CD8-positive, alpha-beta T cell (primary cell): ENCODE measurements at regions of chr12 and their contacts with region 1.

Region 1: GRCh38 chr12:117182866-117183265 is 7.4 kb downstream of the FBXO21 start:
- DNase-seq: no peak
- ATAC-seq: no peak
- H3K4me3 ChIP-seq: no peak overlapping the region
- H3K4me3 Mint-ChIP-seq: no peak overlapping the region
- H3K27ac ChIP-seq: no peak overlapping the region
- H3K27ac Mint-ChIP-seq: no peak overlapping the region
- H3K4me1 ChIP-seq: no peaks in the 10 kb centered on the region
- H3K4me1 Mint-ChIP-seq: peaks cover 29% of the 10 kb centered on the region
- H3K27me3 ChIP-seq: no peaks in the 10 kb centered on the region
- H3K27me3 Mint-ChIP-seq: no peaks in the 10 kb centered on the region
- CTCF ChIP-seq: no peak

Region 2: GRCh38 chr12:116249938-116250337 is 932.9 kb before region 1 on chr12:
- CTCF ChIA-PET with region 1: no interaction called
- POLR2A ChIA-PET with region 1: no interaction called
- intact Hi-C with region 1: loop called in 1 of 2 experiments (anchors 5 kb)
- DNase-seq: no peak
- ATAC-seq: no peak
- H3K4me3 ChIP-seq: no peak overlapping the region
- H3K4me3 Mint-ChIP-seq: no peak overlapping the region
- H3K27ac ChIP-seq: no peak overlapping the region
- H3K27ac Mint-ChIP-seq: no peak overlapping the region
- H3K4me1 ChIP-seq: peaks cover 36% of the 10 kb centered on the region
- H3K4me1 Mint-ChIP-seq: peaks cover 71% of the 10 kb centered on the region
- H3K27me3 ChIP-seq: no peaks in the 10 kb centered on the region
- H3K27me3 Mint-ChIP-seq: no peaks in the 10 kb centered on the region
- CTCF ChIP-seq: no peak

Region 3: DNA sequence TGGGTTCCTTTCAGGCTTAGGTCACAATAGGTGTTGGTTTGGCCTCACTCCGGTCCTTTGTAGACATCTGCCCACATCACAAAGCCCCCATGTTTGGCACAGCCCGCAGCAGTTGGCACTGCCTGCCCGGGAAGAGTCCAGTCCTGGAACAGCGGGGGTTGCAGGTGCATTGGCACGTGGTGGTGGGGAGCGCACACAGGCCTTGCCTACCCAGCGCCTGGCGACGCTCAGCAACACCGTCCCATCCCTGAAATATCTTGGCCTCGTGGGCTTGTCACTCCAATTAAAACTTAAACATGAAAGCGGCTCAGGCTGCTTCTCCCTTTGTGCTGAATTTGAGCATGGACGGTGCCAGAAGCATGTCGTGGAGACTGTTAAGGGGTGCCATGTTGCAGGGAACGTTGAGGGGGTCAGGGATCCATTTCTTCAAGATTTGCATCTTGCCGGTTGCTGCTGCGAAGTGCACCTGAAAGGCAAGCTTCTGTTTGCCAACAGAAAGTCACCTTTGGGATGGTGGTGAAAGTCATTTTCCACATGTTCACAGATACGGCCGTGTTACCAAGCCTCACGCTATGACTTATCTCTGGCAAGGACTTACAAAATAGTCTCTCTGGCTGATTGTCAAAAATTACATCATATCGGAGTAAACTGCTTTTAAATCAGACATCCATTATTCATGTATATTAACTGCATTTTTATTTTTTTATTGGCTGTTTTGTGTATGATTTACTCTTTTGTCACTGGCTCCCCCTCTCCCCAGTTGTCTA is 180.6 kb before region 1 on chr12:
- CTCF ChIA-PET with region 1: no interaction called
- POLR2A ChIA-PET with region 1: no interaction called
- intact Hi-C with region 1: no loop called
- DNase-seq: no peak
- ATAC-seq: no peak
- H3K4me3 ChIP-seq: no peak overlapping the region
- H3K4me3 Mint-ChIP-seq: no peak overlapping the region
- H3K27ac ChIP-seq: no peak overlapping the region
- H3K27ac Mint-ChIP-seq: no peak overlapping the region
- H3K4me1 ChIP-seq: no peaks in the 10 kb centered on the region
- H3K4me1 Mint-ChIP-seq: no peaks in the 10 kb centered on the region
- H3K27me3 ChIP-seq: no peaks in the 10 kb centered on the region
- H3K27me3 Mint-ChIP-seq: no peaks in the 10 kb centered on the region
- CTCF ChIP-seq: no peak